ENCODE measurements at regions of chr10 and their contacts with region 1.

Region 1: GRCh38 chr10:53765311-53765710 is 992.7 kb upstream of the MBL2 start:
- DNase-seq: peak; percentile 71
- ATAC-seq: peak; percentile 90
- H3K4me3 ChIP-seq: no peak overlapping the region
- H3K27ac ChIP-seq: no peak overlapping the region
- H3K4me1 ChIP-seq: no peaks in the 10 kb centered on the region
- H3K27me3 ChIP-seq: no peaks in the 10 kb centered on the region
- CTCF ChIP-seq: no peak

Region 2: GRCh38 chr10:53754596-53755250 is 10.6 kb before region 1 on chr10:
- CTCF ChIA-PET with region 1: interaction called, 16 read pairs
- POLR2A ChIA-PET with region 1: no interaction called
- intact Hi-C with region 1: no loop called
- DNase-seq: peak; percentile 23
- ATAC-seq: peak; percentile 61
- H3K4me3 ChIP-seq: peak overlapping the region; percentile 6; the same call in 1 of the 2 replicates
- H3K27ac ChIP-seq: no peak overlapping the region
- H3K4me1 ChIP-seq: no peaks in the 10 kb centered on the region
- H3K27me3 ChIP-seq: no peaks in the 10 kb centered on the region
- CTCF ChIP-seq: no peak